ENCODE measurements at regions of chr10 and their contacts with region 1.

Region 1: DNA sequence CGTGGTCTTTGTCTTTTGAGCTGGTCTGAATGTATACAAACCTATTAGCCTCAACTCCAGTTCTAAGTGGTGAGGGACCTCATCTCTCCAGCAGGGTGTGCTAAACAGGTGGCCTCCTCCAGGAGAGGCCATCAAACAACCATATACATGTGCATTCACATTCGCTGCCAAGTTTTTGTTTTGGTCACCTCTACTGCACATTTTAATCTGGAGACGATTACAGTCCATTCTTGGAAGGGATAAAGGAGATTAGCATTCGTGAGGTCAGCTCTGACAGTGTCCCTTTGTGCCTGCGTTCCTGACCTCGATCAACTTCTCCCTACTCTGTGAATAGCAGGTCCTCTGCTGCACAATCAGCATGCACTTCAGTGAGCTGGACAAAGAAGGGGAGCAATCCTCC is 60.8 kb downstream of the RHOBTB1 start:
- DNase-seq: no peak
- ATAC-seq: peak; percentile 89

Region 2: GRCh38 chr10:60733189-60733822 is 149.9 kb before region 1 on chr10:
- intact Hi-C with region 1: no loop called
- DNase-seq: peak; percentile 43
- ATAC-seq: peak; percentile 45

Region 3: DNA sequence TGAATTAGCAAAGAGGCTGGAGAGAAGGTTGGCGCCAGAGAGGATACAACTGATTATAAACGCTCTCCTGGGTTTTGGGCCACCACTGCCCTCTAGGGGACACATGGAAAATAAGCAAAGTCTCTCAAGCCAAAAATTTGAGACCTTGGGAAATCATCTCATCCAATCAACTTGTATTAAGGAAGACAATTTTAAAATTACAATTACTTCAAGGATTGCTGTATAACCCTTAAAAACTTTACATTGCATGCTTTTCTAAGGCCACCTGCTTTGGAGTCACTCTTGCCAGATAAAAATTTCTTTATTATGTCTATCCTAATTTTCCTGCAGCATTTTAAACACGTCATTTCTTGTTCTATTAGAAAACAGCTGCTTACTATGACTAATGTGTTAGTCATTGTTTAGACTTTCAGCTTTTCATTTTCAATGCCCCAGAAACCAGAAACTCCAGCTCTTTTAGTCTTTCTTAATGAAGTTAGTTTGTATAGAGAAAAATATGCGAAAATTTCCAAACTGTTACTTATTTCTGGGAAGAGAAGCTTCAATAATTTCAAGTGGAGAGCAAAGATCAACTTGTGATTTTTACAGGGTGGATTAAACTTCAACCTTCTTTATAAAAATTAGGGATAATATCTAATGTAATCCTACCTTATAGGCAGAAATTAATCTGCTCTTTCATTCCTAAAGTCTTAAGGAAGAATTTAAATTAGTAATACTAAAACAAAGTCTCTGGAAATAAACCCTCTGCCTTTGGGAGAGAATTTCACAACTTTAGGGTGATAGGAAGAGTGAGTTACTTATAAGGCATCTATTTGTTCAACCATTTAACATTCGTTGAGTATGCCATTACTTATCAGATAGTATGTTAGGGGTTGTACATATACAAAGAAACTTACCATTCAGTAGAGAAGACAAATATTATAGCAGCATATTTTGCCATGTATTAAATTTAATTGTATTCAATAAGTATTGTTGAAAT is 81.4 kb after region 1 on chr10:
- intact Hi-C with region 1: loop called (anchors 5 kb)
- DNase-seq: peak; percentile 59
- ATAC-seq: peak; percentile 93

Measured in Right ventricle myocardium superior (tissue), 1 donor.